ENCODE measurements at regions of chr11 and their contacts with region 1.

Region 1: GRCh38 chr11:56783448-56784041 is 35.0 kb upstream of the OR9G4 start:
- H3K4me3 ChIP-seq: no peak overlapping the region
- H3K27ac ChIP-seq: no peak overlapping the region
- H3K4me1 ChIP-seq: no peaks in the 10 kb centered on the region
- CTCF ChIP-seq: no peak

Region 2: GRCh38 chr11:56624661-56625110 is 158.9 kb before region 1 on chr11:
- CTCF ChIA-PET with region 1: interaction called, 12 read pairs
- POLR2A ChIA-PET with region 1: no interaction called
- H3K4me3 ChIP-seq: no peak overlapping the region
- H3K27ac ChIP-seq: no peak overlapping the region
- H3K4me1 ChIP-seq: no peaks in the 10 kb centered on the region
- CTCF ChIP-seq: no peak

Region 3: GRCh38 chr11:56799691-56800210 is 16.2 kb after region 1 on chr11:
- CTCF ChIA-PET with region 1: no interaction called
- POLR2A ChIA-PET with region 1: no interaction called
- H3K4me3 ChIP-seq: no peak overlapping the region
- H3K27ac ChIP-seq: no peak overlapping the region
- H3K4me1 ChIP-seq: no peaks in the 10 kb centered on the region
- CTCF ChIP-seq: no peak

Measured in HEK293 (cell line).